Activated CD4-positive, alpha-beta T cell treated with anti-CD3 and anti-CD28 coated beads for 36 hours (primary cell): ENCODE measurements at regions of chr1 and their contacts with region 1.

Region 1: GRCh38 chr1:26666855-26667254 is 29.0 kb upstream of the ARID1A start:
- DNase-seq: peak; percentile 39
- ATAC-seq: peak; percentile 96
- H3K4me3 Mint-ChIP-seq: no peak overlapping the region
- H3K27ac Mint-ChIP-seq: no peak overlapping the region
- H3K4me1 Mint-ChIP-seq: peaks cover 10% of the 10 kb centered on the region
- H3K27me3 Mint-ChIP-seq: no peaks in the 10 kb centered on the region

Region 2: GRCh38 chr1:26627954-26628353 is 38.9 kb before region 1 on chr1:
- CTCF ChIA-PET with region 1: interaction called, 3 read pairs
- POLR2A ChIA-PET with region 1: interaction called, 14 read pairs
- intact Hi-C with region 1: no loop called
- DNase-seq: no peak
- ATAC-seq: no peak
- H3K4me3 Mint-ChIP-seq: no peak overlapping the region
- H3K27ac Mint-ChIP-seq: no peak overlapping the region
- H3K4me1 Mint-ChIP-seq: no peaks in the 10 kb centered on the region
- H3K27me3 Mint-ChIP-seq: no peaks in the 10 kb centered on the region

Region 3: DNA sequence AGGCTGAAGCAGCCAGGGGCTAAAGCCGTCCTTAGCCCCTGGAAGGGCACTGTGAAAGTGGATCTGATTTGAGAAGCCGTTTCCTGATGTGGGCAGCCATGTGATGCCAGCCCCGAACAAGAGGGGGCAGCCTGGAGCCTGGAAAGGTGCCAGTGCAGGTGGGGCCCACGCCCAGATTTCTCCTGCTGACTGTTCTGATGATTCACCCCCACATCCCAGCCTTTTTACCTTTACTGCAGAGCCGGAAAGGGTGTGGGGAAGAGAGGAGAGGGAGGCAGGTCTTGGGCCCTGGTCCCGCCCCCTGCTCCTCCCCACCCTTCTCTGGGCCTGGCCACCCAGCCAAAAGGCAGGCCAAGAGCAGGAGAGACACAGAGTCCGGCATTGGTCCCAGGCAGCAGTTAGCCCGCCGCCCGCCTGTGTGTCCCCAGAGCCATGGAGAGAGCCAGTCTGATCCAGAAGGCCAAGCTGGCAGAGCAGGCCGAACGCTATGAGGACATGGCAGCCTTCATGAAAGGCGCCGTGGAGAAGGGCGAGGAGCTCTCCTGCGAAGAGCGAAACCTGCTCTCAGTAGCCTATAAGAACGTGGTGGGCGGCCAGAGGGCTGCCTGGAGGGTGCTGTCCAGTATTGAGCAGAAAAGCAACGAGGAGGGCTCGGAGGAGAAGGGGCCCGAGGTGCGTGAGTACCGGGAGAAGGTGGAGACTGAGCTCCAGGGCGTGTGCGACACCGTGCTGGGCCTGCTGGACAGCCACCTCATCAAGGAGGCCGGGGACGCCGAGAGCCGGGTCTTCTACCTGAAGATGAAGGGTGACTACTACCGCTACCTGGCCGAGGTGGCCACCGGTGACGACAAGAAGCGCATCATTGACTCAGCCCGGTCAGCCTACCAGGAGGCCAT is 196.2 kb after region 1 on chr1 and contains the start of gene SFN:
- CTCF ChIA-PET with region 1: no interaction called
- POLR2A ChIA-PET with region 1: no interaction called
- intact Hi-C with region 1: no loop called
- DNase-seq: peak; percentile 83
- ATAC-seq: peak; percentile 5
- H3K4me3 Mint-ChIP-seq: peak within 1 kb of the TSS; percentile 89
- H3K27ac Mint-ChIP-seq: no peak within 1 kb of the TSS
- H3K4me1 Mint-ChIP-seq: peaks cover 22% of the 10 kb centered on the region
- H3K27me3 Mint-ChIP-seq: no peaks in the 10 kb centered on the region
- total RNA-seq, gene SFN: 0.87 to 1.1 TPM